Left cardiac atrium (tissue), 4 donors: ENCODE measurements at regions of chr19 and their contacts with region 1.

Region 1: DNA sequence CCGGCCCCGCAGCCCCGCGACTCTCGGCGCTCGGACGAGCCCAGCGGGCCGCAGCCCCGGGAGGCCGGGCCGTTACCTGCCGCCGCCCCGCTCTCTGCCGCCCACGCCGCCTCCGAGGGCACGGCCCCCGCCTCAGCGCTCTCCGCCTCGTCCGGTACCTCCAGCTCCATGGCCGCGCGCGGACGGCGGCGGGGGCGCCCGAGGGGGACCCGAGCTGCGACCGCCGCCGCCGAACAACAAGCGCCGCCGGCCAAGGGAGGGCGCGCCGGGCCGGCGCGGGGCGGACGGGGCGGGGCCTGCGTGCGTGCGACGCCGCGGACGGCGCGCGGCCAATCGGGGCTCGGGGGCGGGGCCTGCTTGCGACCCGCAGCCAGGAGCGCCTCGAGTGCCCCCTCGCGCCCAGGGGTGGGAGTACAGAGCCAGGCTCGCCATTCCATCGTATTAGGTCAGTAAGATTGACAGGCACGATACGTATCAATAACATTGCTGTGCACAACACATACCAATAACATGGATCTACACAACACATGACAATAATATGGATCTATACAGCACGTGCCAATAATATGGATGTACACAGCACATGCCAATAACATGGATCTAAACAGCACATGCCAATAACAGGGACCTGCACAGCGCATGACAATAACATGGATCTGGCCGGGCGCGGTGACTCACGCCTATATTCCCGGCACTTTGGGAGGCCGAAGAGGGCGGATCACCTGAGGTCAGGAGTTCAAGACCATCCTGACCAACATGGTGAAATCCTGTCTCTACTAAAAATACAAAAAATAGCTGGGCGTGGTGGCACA is at the start of gene PIP5K1C:
- DNase-seq: peak; percentile 92
- ATAC-seq: peak; percentile 91 to 96
- total RNA-seq, gene PIP5K1C: 36.6 to 44.3 TPM

Region 2: DNA sequence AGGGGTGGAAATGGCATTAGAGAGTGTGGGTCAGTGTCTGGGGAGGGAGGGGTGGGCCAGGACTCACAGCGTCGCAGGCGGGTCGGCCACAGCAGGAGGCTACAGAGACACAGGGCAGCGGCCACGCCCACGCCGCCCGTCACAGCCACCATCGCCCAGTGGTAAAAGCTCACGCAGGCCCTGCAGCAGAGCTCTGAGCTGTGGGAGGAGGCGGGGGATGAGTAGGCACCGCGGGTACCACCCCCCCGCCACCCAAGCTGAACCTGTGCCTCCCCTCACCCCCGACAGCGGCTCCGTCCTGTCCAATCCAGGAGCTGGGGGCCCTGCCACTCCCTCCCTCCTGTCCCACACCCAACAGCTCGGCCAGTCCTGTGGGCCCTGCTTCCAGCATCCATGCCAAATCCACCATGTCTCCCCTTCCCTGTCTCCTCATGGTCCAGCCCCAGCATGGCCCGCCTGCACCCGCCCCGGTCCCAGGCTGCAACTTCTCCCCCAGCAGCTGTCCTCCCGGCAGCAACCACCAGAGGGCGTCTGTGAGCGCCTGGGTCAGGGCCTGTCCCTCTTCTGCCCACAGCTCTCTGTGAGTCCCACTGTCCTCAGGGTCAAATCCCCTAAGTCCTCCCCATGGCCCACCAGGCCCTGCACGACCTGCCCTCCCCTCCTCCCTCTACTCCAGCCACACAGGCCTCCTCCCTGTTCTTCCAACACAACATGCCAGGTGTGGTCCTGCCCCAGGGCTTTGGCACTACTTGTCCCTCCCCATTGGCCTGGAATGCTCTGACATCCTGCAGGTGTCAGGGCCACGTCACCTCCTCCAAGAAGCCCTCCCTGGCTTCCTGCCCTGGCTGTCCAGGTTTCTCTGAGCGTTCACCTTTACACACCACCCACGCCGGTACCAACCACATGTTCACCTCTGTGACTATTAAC is 155.4 kb before region 1 on chr19:
- intact Hi-C with region 1: loop called (anchors 10 kb)
- DNase-seq: peak; percentile 74
- ATAC-seq: peak; percentile 66 to 72

Region 3: GRCh38 chr19:3665681-3666544 is 34.5 kb before region 1 on chr19:
- intact Hi-C with region 1: loop called (anchors 1 to 2 kb)
- DNase-seq: peak; percentile 72
- ATAC-seq: peak; percentile 18 to 48